ENCODE measurements at regions of chr3 and their contacts with region 1.

Region 1: DNA sequence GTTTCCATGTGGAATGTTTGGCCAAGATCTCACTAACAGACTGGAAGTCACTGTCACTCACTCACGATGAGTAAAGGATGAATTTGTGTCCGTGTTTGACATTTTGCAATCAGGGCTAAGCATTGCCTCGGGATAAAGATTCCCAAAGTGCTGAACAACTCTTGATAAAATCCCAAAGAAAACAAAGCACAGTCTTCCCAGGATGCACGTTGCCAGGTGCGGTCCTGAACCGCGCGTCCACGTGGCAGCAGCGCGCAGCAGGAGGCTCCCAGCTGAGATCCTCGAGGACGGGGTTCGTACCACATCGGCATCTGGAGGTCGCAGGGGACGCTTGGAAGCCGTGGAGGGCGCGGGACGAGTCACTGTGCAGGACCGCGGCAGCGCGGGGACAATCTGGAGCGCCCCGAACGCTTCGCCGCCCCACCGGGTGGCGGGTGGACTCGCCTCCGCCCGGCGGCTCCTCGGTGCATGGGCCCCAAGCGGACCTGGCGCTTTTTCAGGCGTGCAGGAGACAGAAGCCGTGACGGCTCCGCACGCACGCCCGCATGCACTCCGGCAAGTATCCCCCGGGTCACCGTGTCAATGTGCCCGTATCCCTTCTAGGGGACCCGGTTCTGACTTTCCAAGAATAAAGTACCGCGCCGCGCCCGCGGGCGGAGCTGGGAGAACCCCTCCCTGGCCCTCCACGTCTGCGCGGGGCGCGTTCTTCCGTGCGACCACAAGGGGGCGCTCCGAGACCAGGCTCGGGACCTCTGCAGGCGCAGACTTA is 17.7 kb downstream of the CPN2 start:
- DNase-seq: peak; percentile 68 to 91 (median 84)
- ATAC-seq: peak; percentile 95 to 99 (median 96)
- H3K4me3 ChIP-seq: peak overlapping the region; percentile 29 to 63
- H3K4me3 Mint-ChIP-seq: peak overlapping the region; percentile 49 to 68 (median 51)
- H3K27ac ChIP-seq: no peak overlapping the region
- H3K27ac Mint-ChIP-seq: no peak overlapping the region
- H3K4me1 ChIP-seq: peaks cover 0 to 10% of the 10 kb centered on the region in 2 experiments
- H3K4me1 Mint-ChIP-seq: peaks cover 4 to 8% (median 7%) of the 10 kb centered on the region in 3 donors
- H3K27me3 ChIP-seq: peaks cover 3 to 48% of the 10 kb centered on the region in 2 experiments
- H3K27me3 Mint-ChIP-seq: peaks cover 11 to 36% of the 10 kb centered on the region in 2 donors

Region 2: DNA sequence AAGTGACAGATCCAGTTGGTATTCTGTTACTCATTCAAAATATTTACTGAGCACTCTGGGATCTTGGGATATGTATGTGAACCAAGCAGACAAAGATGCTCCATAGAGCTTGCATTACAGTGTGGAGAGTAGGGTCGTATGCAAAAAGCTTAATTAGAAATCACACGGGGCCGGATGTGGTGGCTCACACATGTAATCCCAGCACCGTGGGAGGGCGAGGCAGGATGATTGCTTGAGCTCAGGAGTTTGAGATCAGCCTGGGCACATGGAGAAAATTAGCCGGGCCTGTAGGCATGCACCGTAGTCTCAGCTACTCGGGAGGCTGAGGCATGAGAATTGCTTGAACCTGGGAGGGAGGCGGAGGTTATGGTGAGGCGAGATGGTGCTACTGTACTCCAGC is 1347.0 kb before region 1 on chr3:
- CTCF ChIA-PET with region 1: no interaction called
- POLR2A ChIA-PET with region 1: no interaction called
- DNase-seq: no peak
- ATAC-seq: no peak
- H3K4me3 ChIP-seq: no peak overlapping the region
- H3K4me3 Mint-ChIP-seq: no peak overlapping the region
- H3K27ac ChIP-seq: no peak overlapping the region
- H3K27ac Mint-ChIP-seq: no peak overlapping the region
- H3K4me1 ChIP-seq: no peaks in the 10 kb centered on the region
- H3K4me1 Mint-ChIP-seq: no peaks in the 10 kb centered on the region
- H3K27me3 ChIP-seq: no peaks in the 10 kb centered on the region
- H3K27me3 Mint-ChIP-seq: no peaks in the 10 kb centered on the region

Region 3: DNA sequence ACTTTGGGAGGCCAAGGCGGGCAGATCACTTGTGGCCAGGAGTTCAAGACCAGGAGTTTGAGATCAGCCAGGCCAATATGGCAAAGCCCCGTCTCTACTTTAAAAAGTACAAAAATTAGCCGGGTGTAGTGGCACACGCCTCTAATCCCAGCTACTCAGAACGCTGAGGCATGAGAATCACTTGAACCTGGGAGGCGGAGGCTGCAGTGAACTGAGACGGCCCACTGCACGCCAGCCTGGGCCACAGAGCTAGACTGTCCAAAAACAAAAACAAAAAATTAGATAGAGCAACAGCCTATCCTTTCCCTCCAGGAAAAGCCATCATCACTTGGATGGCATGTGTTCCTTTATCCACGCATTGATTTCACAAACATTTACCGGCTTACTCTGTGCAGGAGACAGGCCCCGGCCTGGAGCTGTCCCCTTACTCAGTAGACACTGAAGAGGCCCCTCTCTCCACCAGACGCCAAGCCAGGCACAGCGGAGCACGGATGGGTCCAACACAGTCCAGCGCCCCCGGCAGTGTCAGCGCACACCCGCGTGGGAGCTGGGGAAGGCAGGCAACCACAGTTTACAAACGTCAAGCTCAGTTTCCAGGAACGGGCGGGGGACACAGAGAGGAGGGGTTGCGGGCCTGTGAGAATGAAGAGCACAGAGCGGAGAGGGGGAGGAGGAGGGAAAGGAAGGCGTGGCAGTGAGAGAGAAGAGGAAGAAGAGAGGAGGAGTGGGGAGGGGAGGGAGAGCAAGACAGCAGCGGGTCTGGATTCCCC is 62.6 kb after region 1 on chr3:
- CTCF ChIA-PET with region 1: interaction called, 7 to 10 read pairs
- POLR2A ChIA-PET with region 1: no interaction called
- DNase-seq: peak; percentile 22 to 83 (median 67)
- ATAC-seq: peak; percentile 63 to 79 (median 68)
- H3K4me3 ChIP-seq: peak overlapping the region; percentile 55 to 79
- H3K4me3 Mint-ChIP-seq: peak overlapping the region; percentile 74 to 95 (median 77)
- H3K27ac ChIP-seq: no peak overlapping the region
- H3K27ac Mint-ChIP-seq: peak overlapping the region; percentile 84 to 88
- H3K4me1 ChIP-seq: peaks cover 9 to 40% of the 10 kb centered on the region in 2 experiments
- H3K4me1 Mint-ChIP-seq: peaks cover 45 to 56% (median 55%) of the 10 kb centered on the region in 3 donors
- H3K27me3 ChIP-seq: peaks cover 0 to 20% of the 10 kb centered on the region in 2 experiments
- H3K27me3 Mint-ChIP-seq: peaks cover 0 to 19% of the 10 kb centered on the region in 2 donors